ENCODE measurements at regions of chr5 and their contacts with region 1.

Region 1: DNA sequence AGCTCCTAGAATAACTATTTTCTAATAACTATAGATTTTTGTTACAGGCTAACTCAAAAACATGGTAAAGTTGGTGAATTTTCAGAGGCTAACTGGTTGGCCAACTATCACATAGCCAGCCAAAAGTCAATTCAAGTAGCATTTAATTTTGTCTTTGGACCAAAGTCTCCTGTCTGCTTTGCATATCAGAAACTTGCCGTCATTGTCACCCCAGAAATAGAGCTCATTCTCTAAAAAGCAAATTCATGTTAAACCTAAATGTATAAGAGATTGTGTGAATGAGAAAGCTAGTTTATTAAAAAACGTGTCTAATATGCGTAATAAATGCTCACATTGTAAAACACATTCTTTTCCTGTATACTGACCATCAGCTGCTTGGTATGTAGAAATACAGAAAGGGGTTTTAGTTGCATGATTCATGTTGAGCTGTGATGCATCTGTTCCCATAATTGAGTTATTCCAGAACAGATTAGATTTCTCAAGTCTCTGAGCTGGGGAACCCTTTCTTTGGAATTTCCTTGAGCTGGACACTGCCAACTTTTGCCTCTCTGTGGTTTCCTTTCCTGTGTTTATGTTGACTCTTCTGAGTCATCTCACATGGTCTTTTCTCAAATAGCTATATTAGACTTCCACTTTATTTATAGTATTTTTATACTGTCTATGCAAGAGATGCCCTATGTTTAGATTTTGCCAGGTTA is 7.3 kb downstream of the SRFBP1 start:
- DNase-seq: peak; percentile 100
- ATAC-seq: peak; percentile 94
- H3K4me3 ChIP-seq: no peak overlapping the region
- H3K27ac ChIP-seq: peak overlapping the region; percentile 39; the same call in 1 of the 2 replicates
- H3K4me1 ChIP-seq: peaks cover 6% of the 10 kb centered on the region
- H3K27me3 ChIP-seq: no peaks in the 10 kb centered on the region
- CTCF ChIP-seq: no peak
- POLR2A ChIP-seq: no peak
- RAD21 ChIP-seq: no peak; the same call in 1 of the 2 replicates

Region 2: DNA sequence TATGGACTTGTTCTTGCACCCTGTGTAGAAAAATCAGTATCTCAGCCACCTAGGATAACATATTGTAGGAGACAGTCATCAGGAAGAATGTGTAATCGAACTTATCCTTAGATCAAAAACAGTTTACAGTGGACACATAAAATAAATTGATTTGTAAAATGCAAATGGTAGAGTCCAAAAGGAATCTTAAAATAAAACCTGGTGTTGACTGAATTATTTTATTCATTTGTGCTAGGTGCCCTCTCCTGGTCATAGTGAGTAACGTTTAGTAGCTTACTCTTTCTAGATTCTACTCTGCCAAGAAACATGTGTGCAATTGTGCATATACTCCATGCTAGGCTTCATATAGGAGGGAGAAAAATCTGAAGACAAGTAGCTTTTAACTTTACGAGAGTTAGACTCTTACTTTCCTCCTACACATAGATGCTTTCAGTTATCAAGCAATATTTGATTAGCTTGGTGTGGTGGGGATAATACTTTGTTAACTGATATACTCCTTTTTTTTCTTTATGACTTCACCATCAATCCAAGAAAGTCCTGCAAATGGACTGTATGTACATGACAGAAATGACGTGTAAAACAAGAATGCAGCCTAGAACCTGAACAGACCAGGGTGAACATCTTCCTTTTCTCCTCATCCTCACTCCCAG is 132.7 kb after region 1 on chr5:
- CTCF ChIA-PET with region 1: interaction called, 14 read pairs
- POLR2A ChIA-PET with region 1: no interaction called
- dilution Hi-C with region 1: no loop called
- in situ Hi-C with region 1: loop called (anchors 5 kb)
- intact Hi-C with region 1: loop called (anchors 1 kb)
- DNase-seq: peak; percentile 79
- ATAC-seq: peak; percentile 79
- H3K4me3 ChIP-seq: no peak overlapping the region
- H3K27ac ChIP-seq: no peak overlapping the region
- H3K4me1 ChIP-seq: peaks cover 5% of the 10 kb centered on the region
- H3K27me3 ChIP-seq: no peaks in the 10 kb centered on the region
- CTCF ChIP-seq: peak; percentile 72
- POLR2A ChIP-seq: no peak
- RAD21 ChIP-seq: peak; percentile 74

Region 3: DNA sequence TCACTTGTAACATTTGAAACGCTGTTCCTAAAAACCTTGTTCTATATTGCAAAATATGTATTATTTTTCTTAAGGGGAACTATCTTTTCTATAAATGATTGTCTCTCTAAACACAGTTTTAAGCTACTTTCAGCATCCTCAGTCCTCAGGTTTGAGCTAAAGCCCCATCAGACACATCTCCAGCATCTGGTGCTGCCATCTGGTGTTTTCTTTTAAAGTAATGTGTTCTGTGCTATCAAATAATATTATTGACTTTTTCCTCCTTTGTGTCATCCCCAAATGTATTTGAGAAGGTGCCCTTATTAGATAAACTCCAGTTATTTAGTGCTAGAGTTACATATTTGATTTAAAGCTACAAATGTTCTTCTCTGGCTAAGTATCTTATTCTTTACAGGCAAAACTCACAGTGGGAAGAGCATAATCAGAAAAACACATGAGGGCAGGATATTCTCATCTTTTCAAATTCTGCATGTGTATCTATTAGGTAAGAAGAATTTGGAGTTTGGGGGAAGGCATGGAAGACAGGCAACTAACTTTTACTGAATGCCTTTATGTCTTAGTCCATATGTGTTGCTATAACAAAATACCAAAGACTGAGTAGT is 187.8 kb after region 1 on chr5:
- CTCF ChIA-PET with region 1: interaction called, 11 read pairs
- POLR2A ChIA-PET with region 1: no interaction called
- dilution Hi-C with region 1: no loop called
- in situ Hi-C with region 1: loop called (anchors 10 kb)
- intact Hi-C with region 1: loop called (anchors 1 kb)
- DNase-seq: peak; percentile 78
- ATAC-seq: no peak; the same call in 1 of the 2 replicates
- H3K4me3 ChIP-seq: no peak overlapping the region
- H3K27ac ChIP-seq: no peak overlapping the region
- H3K4me1 ChIP-seq: peaks cover 27% of the 10 kb centered on the region
- H3K27me3 ChIP-seq: no peaks in the 10 kb centered on the region
- CTCF ChIP-seq: peak; percentile 66
- POLR2A ChIP-seq: no peak
- RAD21 ChIP-seq: peak; percentile 80

Region 4: DNA sequence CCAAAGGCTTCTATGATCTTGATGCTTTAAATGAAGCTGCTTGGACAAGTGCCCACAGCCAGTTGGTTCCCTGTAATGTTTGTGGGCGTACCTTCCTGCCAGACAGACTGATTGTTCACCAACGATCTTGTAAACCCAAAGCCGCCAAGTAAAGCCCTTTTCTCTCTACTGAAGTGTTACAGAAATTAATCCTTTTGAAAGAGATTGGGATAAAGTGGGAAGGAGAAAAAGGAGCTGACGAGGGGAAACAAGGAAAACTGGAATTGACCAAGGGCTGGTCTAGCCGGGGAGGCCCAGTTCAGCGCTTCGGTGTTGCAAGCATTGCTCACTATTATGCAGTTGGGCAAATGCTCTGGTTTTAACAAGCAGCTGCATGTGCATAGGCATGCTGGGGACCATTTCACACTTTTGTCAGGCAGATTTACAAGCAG is 213.4 kb after region 1 on chr5:
- CTCF ChIA-PET with region 1: no interaction called
- POLR2A ChIA-PET with region 1: no interaction called
- dilution Hi-C with region 1: no loop called
- in situ Hi-C with region 1: no loop called
- intact Hi-C with region 1: loop called (anchors 2 kb)
- DNase-seq: peak; percentile 89
- ATAC-seq: peak; percentile 53
- H3K4me3 ChIP-seq: no peak overlapping the region
- H3K27ac ChIP-seq: peak overlapping the region; percentile 73
- H3K4me1 ChIP-seq: peaks cover 11% of the 10 kb centered on the region
- H3K27me3 ChIP-seq: no peaks in the 10 kb centered on the region
- CTCF ChIP-seq: no peak
- POLR2A ChIP-seq: no peak
- RAD21 ChIP-seq: no peak

Region 5: DNA sequence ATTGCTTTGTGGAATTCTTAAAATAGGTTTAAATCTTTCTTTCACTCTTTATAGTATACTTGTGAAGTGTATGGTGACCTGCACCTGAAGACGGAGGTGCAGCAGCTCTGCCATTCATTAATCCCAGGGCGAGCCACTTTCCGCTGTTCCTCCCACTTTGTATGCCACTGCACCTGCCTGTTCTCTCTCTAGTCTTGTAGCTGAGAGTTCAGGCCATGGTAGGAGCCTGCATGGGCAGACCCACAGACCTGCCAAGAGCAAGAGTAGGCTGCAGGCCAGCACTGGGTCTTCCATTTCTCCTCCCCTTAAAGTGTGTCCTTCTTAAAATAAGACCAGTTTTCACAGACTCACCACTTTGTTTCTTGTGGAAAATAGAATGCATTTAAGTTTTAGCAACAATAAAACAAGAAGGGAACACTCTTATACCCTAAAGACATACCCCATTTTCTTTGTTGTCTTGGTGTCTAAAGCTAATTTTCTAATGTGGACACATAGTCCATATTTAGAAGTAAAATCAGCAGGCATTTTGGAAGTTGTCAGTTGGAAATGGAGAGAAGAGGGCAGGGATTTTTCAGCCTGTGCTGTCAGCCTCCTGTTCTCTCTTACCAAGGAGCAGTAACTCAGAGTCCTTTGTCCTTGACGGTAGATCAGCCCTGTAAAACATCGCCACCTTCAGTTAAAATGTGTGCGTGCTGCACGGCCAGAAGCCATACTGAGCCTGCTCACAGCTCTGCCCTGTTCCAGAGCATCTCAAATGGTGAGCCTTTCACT is 446.2 kb after region 1 on chr5:
- CTCF ChIA-PET with region 1: no interaction called
- POLR2A ChIA-PET with region 1: no interaction called
- dilution Hi-C with region 1: no loop called
- in situ Hi-C with region 1: loop called (anchors 25 kb)
- intact Hi-C with region 1: loop called (anchors 10 kb)
- DNase-seq: peak; percentile 80
- ATAC-seq: peak; percentile 97
- H3K4me3 ChIP-seq: no peak overlapping the region
- H3K27ac ChIP-seq: no peak overlapping the region
- H3K4me1 ChIP-seq: peaks cover 9% of the 10 kb centered on the region
- H3K27me3 ChIP-seq: no peaks in the 10 kb centered on the region
- CTCF ChIP-seq: peak; percentile 85
- POLR2A ChIP-seq: no peak
- RAD21 ChIP-seq: peak; percentile 87

Measured in IMR-90 (cell line).